GM12878 (cell line): ENCODE measurements at regions of chr10 and their contacts with region 1.

Region 1: GRCh38 chr10:70461215-70461986 is 17.2 kb upstream of the PALD1 start:
- DNase-seq: no peak
- ATAC-seq: peak; percentile 88
- H3K4me3 ChIP-seq: no peak overlapping the region
- H3K27ac ChIP-seq: no peak overlapping the region
- H3K4me1 ChIP-seq: no peaks in the 10 kb centered on the region
- H3K27me3 ChIP-seq: peaks cover 3 to 5% of the 10 kb centered on the region in 2 experiments; a peak in 3 of 4 replicates
- CTCF ChIP-seq: peak; percentile 88 to 95 (median 90)
- EP300 ChIP-seq: no peak
- POLR2A ChIP-seq: no peak
- RAD21 ChIP-seq: peak; percentile 98

Region 2: DNA sequence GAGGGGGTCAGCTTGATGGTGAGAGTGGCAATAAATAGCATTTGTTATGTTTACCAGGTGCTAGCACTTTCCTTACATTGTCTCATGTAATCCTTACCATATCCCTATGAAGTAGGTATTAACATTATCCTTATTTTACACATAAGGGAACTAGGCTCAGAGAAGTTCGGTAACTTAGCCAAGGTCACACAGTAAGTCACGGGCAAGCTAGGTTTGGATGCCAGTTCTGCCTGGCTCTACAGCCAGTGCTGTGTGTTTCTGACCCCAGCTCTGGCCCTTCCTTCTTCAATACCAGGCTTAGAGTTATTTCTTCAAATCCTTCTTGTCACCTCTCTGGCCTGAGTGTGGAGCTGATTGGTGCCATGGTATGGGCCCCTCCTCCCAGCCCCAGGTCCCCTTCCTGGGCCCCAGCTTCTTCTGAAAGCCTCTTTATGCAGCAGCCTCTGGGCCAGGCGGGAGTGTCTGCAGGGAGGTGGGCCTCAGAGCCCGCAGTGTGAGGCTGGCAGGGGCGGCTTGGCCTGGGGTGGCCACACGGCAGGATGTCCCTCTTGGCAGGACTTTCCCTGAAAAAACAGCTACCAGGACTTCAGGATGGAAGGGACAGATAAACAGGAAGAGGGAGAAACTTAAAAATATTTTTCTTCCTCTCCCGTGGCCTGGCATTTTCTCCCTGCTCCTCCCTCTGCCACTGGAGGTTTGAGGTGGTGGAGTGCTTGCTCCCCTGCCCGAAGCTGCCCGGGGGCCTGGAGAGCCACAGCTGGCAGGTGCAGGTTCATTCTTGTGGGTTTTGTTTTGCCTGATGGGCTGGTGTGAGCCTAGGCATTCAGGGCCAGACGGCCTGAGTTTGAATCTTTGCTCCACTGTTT is 37.8 kb after region 1 on chr10:
- CTCF ChIA-PET with region 1: interaction called, 17 read pairs
- POLR2A ChIA-PET with region 1: no interaction called
- RAD21 ChIA-PET with region 1: interaction called, 4 read pairs
- SMC1A ChIA-PET with region 1: interaction called, 7 read pairs
- in situ Hi-C with region 1: no loop called
- intact Hi-C with region 1: no loop called
- DNase-seq: no peak
- ATAC-seq: no peak
- H3K4me3 ChIP-seq: no peak overlapping the region
- H3K27ac ChIP-seq: peak overlapping the region; percentile 17; the same call in 1 of the 2 replicates
- H3K4me1 ChIP-seq: peaks cover 34% of the 10 kb centered on the region
- H3K27me3 ChIP-seq: no peaks in the 10 kb centered on the region
- CTCF ChIP-seq: no peak
- EP300 ChIP-seq: no peak
- POLR2A ChIP-seq: no peak
- RAD21 ChIP-seq: no peak

Region 3: DNA sequence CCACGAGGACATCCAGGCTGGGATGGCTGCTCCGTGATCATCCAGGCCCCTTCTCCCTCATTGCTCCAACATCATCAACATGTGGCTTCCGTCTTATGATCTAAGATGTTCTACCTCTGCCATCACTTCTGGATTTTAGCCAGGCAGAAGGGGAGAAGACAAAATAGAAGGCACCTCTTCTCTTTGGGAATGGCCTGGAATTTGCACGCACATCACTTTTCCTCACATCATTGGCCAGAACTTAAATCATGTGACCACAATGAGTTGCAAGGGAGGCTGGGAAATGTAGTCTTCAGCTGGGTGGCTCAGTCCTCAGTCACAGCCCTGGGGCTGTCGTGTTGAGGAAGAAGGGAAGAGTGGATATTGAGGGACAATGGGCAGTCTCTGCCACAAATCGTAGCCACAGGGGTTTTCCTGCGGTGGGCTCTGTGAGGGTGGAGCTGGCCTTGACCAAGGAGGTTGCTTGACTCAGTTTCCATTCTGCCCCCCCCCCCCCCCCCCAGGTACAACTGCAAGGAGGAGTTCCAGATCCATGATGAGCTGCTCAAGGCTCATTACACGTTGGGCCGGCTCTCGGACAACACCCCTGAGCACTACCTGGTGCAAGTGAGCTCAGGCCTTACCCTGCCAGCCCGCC is 67.4 kb after region 1 on chr10:
- CTCF ChIA-PET with region 1: interaction called, 21 read pairs
- POLR2A ChIA-PET with region 1: no interaction called
- RAD21 ChIA-PET with region 1: interaction called, 11 read pairs
- SMC1A ChIA-PET with region 1: interaction called, 8 read pairs
- in situ Hi-C with region 1: no loop called
- intact Hi-C with region 1: no loop called
- DNase-seq: no peak
- ATAC-seq: peak; percentile 85
- H3K4me3 ChIP-seq: no peak overlapping the region
- H3K27ac ChIP-seq: no peak overlapping the region
- H3K4me1 ChIP-seq: no peaks in the 10 kb centered on the region
- H3K27me3 ChIP-seq: no peaks in the 10 kb centered on the region
- CTCF ChIP-seq: no peak
- EP300 ChIP-seq: no peak
- POLR2A ChIP-seq: no peak
- RAD21 ChIP-seq: no peak

Region 4: DNA sequence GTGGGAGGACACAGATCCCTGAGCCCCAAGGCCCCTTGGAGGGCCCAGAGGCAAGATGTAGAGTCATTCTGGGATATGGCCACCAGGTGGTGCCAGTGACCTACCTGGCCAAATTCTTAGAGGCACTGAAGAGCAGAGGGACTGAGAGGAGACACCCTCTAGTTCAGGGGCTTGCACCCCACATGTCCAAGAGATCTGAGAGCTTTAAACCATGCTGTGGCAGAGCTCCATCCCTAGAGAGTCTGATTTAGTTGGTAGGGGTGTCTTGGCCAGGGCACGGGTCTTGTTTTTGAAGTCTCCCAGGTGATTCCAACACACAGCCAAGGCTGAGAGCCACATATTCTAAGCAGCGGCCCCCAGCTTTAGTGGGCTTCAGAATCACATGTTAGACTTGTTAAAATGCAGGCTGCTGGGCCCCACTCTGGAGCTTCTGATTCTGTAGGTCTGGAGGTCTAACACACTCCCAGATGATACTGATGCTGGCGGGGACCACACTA is 88.6 kb after region 1 on chr10:
- CTCF ChIA-PET with region 1: interaction called, 74 read pairs
- POLR2A ChIA-PET with region 1: no interaction called
- RAD21 ChIA-PET with region 1: interaction called, 15 read pairs
- SMC1A ChIA-PET with region 1: interaction called, 13 read pairs
- in situ Hi-C with region 1: no loop called
- intact Hi-C with region 1: no loop called
- DNase-seq: peak; percentile 17
- ATAC-seq: peak; percentile 97
- H3K4me3 ChIP-seq: no peak overlapping the region
- H3K27ac ChIP-seq: no peak overlapping the region
- H3K4me1 ChIP-seq: no peaks in the 10 kb centered on the region
- H3K27me3 ChIP-seq: no peaks in the 10 kb centered on the region
- CTCF ChIP-seq: peak; percentile 87 to 91 (median 91)
- EP300 ChIP-seq: no peak
- POLR2A ChIP-seq: no peak
- RAD21 ChIP-seq: peak; percentile 99

Region 5: GRCh38 chr10:70880077-70880534 is 418.7 kb after region 1 on chr10:
- CTCF ChIA-PET with region 1: interaction called, 4 read pairs
- POLR2A ChIA-PET with region 1: no interaction called
- RAD21 ChIA-PET with region 1: interaction called, 5 read pairs
- SMC1A ChIA-PET with region 1: interaction called, 3 read pairs
- in situ Hi-C with region 1: loop called (anchors 10 kb)
- intact Hi-C with region 1: loop called (anchors 10 kb)
- DNase-seq: peak; percentile 32
- ATAC-seq: peak; percentile 100
- H3K4me3 ChIP-seq: no peak overlapping the region
- H3K27ac ChIP-seq: no peak overlapping the region
- H3K4me1 ChIP-seq: no peaks in the 10 kb centered on the region
- H3K27me3 ChIP-seq: no peaks in the 10 kb centered on the region
- CTCF ChIP-seq: peak; percentile 85 to 92 (median 89); a peak in 5 of 6 replicates
- EP300 ChIP-seq: no peak
- POLR2A ChIP-seq: no peak
- RAD21 ChIP-seq: peak; percentile 90